ENCODE measurements at regions of chr2 and their contacts with region 1.

Region 1: DNA sequence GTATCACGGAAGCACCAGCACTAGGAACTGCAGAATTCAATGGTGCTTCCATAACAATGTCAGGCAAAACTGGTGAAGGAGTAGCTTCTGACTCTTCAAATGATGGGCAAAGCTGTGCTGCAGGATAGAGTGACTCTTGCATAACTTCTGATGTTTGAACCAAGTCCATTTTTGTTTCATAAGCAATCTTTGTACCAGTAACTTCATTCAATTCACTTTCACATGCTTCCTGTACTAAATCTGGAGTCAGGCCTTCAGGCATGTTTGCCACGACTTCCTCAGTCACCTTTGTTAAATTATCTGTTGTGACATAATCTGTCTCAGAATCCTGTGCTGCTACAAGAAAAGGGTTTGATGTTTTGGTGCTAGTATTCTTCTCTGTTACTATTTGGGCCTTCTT is 24.0 kb downstream of the RTN4 start:
- DNase-seq: no peak
- H3K4me3 ChIP-seq: no peak overlapping the region
- CTCF ChIP-seq: no peak

Region 2: GRCh38 chr2:55014962-55015939 is 11.0 kb before region 1 on chr2:
- CTCF ChIA-PET with region 1: interaction called, 23 read pairs
- POLR2A ChIA-PET with region 1: no interaction called
- DNase-seq: no peak
- H3K4me3 ChIP-seq: no peak overlapping the region
- CTCF ChIP-seq: peak; percentile 58

Region 3: DNA sequence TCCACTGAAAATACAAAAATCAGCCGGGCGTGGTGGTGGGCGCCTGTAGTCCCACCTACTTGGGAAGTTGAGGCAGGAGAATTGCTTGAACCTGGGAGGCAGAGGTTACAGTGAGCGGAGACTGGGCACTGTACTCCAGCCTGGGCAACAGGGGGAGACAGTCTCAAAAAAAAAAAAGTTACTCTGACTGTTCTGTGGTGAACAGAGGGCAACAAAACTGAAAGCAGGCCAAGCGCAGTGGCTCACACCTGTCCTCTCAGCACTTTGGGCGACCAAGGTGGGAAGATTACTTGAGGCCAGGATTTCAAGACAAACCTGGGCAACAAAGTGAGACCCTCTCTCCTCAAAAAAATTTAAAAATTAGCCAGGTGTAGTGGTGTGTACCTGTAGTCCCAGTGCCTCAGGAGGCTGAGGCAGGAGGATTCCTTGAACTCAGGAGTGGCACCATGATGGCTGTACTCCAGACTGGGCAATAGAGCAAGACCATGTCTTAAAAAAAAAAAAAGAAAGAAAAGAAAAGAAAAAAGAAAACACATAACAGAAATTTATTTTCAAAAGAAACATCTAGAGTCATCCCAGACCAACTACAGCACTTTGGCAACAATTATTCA is 37.6 kb after region 1 on chr2:
- CTCF ChIA-PET with region 1: no interaction called
- POLR2A ChIA-PET with region 1: no interaction called
- DNase-seq: no peak
- H3K4me3 ChIP-seq: no peak overlapping the region
- CTCF ChIP-seq: no peak

Region 4: DNA sequence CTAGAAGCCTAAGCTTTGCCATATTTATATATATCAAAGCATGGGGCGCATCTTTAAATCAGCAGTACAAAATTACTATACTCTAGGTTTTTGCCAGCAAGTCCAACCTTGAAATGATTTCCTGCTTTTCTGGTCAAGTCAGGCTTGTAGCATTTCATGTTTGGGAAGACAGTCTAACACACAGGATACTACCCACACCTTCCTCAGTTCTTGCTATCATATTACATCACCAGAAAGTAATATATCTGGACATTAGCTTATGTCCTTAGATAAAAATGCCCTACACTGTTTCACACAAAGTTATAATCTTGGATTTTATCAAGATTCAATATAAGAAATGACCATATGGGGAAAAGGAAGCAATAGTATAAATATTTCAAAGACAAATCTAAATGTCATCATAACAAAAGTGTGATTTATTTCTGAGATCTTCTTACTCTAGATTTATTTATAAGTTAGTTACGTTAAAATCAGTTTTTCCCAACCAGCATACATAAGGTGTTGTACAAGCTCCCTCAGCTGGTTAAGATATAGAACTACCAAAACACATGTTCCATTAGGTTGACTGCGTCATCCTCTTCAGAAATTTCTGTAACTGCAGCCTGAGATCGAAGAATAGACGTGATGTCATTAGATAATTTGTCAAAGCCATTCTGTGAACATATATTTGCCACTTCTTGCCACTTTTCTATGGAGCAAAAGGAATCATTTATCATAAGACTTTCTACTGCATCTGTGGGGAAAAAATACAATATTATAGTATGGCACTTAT is 149.2 kb after region 1 on chr2:
- CTCF ChIA-PET with region 1: interaction called, 22 read pairs
- POLR2A ChIA-PET with region 1: no interaction called
- DNase-seq: no peak
- H3K4me3 ChIP-seq: no peak overlapping the region
- CTCF ChIP-seq: peak; percentile 40